ENCODE measurements at regions of chr5 and their contacts with region 1.

Region 1: DNA sequence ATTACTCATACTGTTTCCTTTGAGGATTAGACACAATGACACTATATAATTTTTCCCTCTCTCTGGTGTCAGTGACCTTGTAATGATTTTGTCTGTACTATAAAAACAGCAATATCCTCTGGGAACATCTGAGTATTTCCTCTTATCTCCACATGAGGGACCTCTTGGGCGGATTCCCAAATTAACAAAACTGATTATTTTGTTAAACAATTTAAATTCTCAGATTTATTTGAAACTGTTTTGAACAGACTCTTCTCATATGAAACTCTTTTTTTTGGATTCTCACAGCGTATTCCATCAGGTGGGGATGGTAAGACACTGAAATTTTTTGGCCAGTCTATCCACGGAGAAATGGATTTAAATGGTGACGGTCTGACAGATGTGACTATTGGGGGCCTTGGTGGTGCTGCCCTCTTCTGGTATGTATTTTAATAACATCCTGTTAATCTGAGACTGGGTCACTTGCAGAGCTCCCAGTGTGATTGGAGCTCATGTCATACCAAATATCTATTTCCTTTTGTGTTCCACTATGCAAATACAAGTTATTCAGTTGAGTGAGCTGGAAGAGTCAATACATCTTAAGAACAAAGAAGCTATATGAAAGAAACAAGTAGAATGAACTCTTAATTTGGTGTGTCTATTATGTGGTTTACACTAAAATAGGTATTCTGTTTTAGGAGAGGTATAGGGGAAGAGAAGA is 73.8 kb upstream of the ITGA2 start:
- DNase-seq: no peak
- ATAC-seq: peak; percentile 21 to 76
- H3K4me3 ChIP-seq: peak overlapping the region in 3 of 4 donors; percentile 27 to 45 (median 32)
- H3K27ac ChIP-seq: peak overlapping the region in 3 of 4 donors; percentile 16 to 47 (median 39)
- H3K4me1 ChIP-seq: peaks cover 0 to 3% of the 10 kb centered on the region in 2 donors
- H3K27me3 ChIP-seq: no peaks in the 10 kb centered on the region
- CTCF ChIP-seq: peak; percentile 46 to 72 (median 59)
- POLR2A ChIP-seq: no peak

Region 2: DNA sequence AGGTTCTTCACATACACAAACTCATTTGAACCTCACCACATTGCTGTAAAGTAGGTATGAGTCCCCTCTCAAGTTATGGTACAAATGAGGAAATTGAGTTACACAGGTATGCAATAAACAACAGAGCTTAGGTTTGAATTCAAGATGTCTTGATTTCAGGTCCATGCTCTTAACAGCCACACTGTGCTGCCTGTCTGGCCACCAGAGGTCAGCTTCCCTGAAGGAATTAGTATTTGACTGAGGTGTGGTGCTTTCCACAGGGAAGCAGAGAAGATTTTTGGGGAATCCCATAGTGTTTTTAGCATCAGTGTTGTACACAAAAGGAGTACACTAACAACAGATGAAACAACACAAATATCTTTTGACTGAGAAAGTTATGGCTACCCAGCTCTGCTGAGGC is 222.0 kb before region 1 on chr5:
- in situ Hi-C with region 1: loop called in 1 of 4 experiments (anchors 25 kb)
- intact Hi-C with region 1: loop called (anchors 2 kb)
- DNase-seq: no peak
- ATAC-seq: no peak
- H3K4me3 ChIP-seq: no peak overlapping the region
- H3K27ac ChIP-seq: no peak overlapping the region
- H3K4me1 ChIP-seq: no peaks in the 10 kb centered on the region
- H3K27me3 ChIP-seq: no peaks in the 10 kb centered on the region
- CTCF ChIP-seq: peak; percentile 14 to 60 (median 30)
- POLR2A ChIP-seq: no peak

Region 3: DNA sequence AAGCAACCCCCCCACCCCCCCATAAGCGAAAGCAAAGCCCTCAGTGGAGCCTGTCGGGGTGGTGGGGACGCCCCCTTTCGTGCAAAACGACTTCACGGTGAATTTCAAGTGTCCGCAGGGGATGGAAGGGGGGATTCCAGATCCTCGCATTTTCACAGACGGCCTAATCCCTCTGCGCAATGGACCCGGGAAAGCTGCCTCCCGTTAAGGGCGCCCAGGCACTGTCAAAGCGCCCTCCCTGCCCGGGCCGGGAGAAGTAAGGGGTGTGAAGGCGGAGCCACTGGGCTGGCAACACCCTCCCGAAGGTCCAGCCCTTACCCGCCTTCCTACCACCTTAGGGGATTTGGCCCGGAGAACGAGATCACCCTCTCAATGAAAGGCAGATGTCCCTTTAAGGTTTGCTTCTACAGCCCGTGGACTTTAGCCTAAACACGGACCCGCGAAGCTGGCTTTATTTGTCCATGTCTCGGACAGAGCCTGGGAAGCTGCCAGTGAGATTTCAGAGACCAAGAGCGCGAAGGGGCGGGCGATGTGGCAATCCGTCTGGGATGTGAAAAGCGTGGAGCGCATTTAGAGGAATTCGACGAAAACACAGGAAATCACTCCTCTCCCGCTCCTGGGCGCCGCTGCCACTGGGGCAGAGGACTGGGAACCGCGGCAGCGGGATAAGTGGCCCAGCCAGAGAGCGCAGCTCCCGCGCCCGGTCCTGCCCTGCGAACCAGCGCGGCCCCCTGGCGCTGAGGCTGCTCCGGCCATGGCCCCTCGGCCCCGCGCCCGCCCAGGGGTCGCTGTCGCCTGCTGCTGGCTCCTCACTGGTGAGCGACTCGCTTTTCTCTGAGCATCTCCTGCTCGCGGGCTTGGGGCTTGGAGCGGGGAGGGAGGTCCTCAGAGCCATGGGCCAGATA is 127.5 kb before region 1 on chr5 and contains the starts of genes ITGA1 and PELO:
- in situ Hi-C with region 1: loop called in 1 of 4 experiments (anchors 25 kb)
- intact Hi-C with region 1: loop called (anchors 2 kb)
- DNase-seq: peak; percentile 33 to 50
- ATAC-seq: peak; percentile 63 to 74
- H3K4me3 ChIP-seq: peak within 1 kb of the TSS; percentile 61 to 76 (median 68)
- H3K27ac ChIP-seq: peak within 1 kb of the TSS; percentile 68 to 83 (median 76)
- H3K4me1 ChIP-seq: peaks cover 7 to 11% of the 10 kb centered on the region in 2 donors
- H3K27me3 ChIP-seq: peaks cover 0 to 7% (median 0%) of the 10 kb centered on the region in 3 donors
- CTCF ChIP-seq: peak in 4 of 5 experiments; percentile 29 to 41 (median 38)
- POLR2A ChIP-seq: peak; percentile 27 to 44
- total RNA-seq, gene ITGA1: 5.7 to 20.4 (median 12.4) TPM
- total RNA-seq, gene PELO: 13.8 to 28.5 (median 18.5) TPM

Region 4: GRCh38 chr5:52799983-52800393 is 115.3 kb before region 1 on chr5:
- in situ Hi-C with region 1: loop called in 1 of 4 experiments (anchors 25 kb)
- intact Hi-C with region 1: no loop called
- DNase-seq: peak; percentile 89 to 93
- ATAC-seq: peak; percentile 88 to 90
- H3K4me3 ChIP-seq: peak overlapping the region; percentile 62 to 81 (median 76)
- H3K27ac ChIP-seq: peak overlapping the region; percentile 88 to 96 (median 92)
- H3K4me1 ChIP-seq: peaks cover 51 to 55% of the 10 kb centered on the region in 2 donors
- H3K27me3 ChIP-seq: no peaks in the 10 kb centered on the region
- CTCF ChIP-seq: no peak
- POLR2A ChIP-seq: peak; percentile 81 to 84

Measured in gastrocnemius medialis (tissue), 4 donors.